ENCODE measurements at regions of chr6 and their contacts with region 1.

Region 1: GRCh38 chr6:119627908-119628669 is 278.5 kb upstream of the MAN1A1 start:
- DNase-seq: peak; percentile 80
- H3K4me3 ChIP-seq: no peak overlapping the region
- H3K27ac ChIP-seq: peak overlapping the region; percentile 59
- H3K4me1 ChIP-seq: peaks cover 17% of the 10 kb centered on the region
- H3K27me3 ChIP-seq: no peaks in the 10 kb centered on the region
- CTCF ChIP-seq: peak; percentile 5 to 46

Region 2: GRCh38 chr6:119333707-119334295 is 294.3 kb before region 1 on chr6:
- CTCF ChIA-PET with region 1: no interaction called
- dilution Hi-C with region 1: no loop called
- in situ Hi-C with region 1: no loop called
- intact Hi-C with region 1: loop called (anchors 1 kb)
- DNase-seq: peak; percentile 20
- H3K4me3 ChIP-seq: no peak overlapping the region
- H3K27ac ChIP-seq: no peak overlapping the region
- H3K4me1 ChIP-seq: no peaks in the 10 kb centered on the region
- H3K27me3 ChIP-seq: peaks cover 1% of the 10 kb centered on the region
- CTCF ChIP-seq: peak; percentile 53 to 67

Region 3: GRCh38 chr6:119533603-119534279 is 94.3 kb before region 1 on chr6:
- CTCF ChIA-PET with region 1: no interaction called
- dilution Hi-C with region 1: no loop called
- in situ Hi-C with region 1: no loop called
- intact Hi-C with region 1: loop called (anchors 5 kb)
- DNase-seq: peak; percentile 83
- H3K4me3 ChIP-seq: no peak overlapping the region
- H3K27ac ChIP-seq: no peak overlapping the region
- H3K4me1 ChIP-seq: peaks cover 23% of the 10 kb centered on the region
- H3K27me3 ChIP-seq: no peaks in the 10 kb centered on the region
- CTCF ChIP-seq: no peak